Left ventricle myocardium superior (tissue), 1 donor: ENCODE measurements at regions of chr15 and their contacts with region 1.

Region 1: DNA sequence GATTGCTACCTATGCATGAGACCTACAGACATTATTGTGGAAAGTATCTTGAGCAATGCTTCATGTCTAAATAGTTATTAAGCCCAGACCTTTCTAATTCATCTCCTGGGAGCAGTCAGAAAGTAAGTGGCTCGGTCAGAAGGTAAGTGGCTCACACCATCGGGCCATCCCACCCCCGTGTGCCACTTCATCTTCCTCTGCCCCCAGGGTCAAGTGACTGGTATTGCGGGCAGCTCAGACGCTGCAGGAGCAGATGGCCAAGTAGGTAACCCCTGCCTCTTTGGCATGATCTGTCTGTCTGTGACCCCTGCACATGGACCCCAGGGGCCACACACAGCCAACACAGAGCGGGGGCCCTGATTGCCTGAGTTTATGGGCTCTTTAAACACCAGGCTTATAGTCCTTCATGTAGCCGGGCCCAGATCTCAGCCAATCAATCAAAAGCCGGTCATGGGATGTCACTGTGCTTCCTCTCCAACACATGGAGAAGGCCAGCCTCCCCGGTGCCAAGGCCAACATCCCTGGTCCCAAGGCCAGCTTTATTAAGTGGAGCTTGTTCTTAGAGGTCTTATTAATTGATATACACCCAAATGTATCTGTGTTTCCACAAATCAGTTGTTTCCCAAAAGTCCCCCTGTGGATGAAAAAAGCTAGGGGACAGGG is 42.9 kb downstream of the LARP6 start:
- DNase-seq: no peak
- ATAC-seq: no peak

Region 2: DNA sequence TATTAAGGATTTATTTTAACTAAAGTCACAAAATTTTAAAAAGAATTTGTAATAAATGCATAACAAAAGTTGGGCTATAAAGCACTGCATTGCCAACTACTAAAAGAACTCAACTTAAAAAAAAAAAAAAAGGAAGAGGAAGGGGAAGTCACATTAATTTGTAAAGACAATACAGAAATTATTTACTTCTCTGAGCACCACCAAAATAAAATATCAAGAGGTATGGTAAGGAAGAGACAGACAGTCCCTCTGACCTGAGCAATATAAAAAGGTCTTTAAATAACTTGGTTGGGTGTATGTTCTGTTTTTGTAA is 131.2 kb before region 1 on chr15:
- intact Hi-C with region 1: loop called (anchors 5 kb)
- DNase-seq: no peak
- ATAC-seq: no peak